ENCODE measurements at regions of chr3 and their contacts with region 1.

Region 1: GRCh38 chr3:121592856-121593702 is at the start of gene FBXO40:
- DNase-seq: no peak
- ATAC-seq: peak; percentile 80
- total RNA-seq, gene FBXO40: 182 TPM

Region 2: DNA sequence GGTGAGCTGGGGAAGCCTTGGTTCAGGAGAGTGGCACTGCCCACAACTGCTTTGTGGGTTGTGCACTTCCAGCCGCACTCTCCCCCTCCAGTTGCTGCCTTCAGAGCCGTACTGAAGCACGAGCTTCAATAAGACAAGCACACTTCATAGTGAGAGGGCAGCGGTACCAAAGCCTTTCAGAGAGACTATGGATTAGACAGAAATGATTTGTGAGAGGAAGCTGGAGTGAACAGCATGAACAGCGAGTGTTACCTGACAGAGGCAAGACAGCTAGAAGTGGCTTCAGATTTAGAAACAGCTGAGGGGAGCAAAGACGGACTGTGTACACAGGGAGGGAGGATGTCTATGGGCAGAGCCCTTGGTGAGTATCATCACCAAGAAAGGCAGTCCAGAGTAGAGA is 36.5 kb after region 1 on chr3:
- intact Hi-C with region 1: loop called (anchors 5 kb)
- DNase-seq: no peak
- ATAC-seq: peak; percentile 85

Region 3: DNA sequence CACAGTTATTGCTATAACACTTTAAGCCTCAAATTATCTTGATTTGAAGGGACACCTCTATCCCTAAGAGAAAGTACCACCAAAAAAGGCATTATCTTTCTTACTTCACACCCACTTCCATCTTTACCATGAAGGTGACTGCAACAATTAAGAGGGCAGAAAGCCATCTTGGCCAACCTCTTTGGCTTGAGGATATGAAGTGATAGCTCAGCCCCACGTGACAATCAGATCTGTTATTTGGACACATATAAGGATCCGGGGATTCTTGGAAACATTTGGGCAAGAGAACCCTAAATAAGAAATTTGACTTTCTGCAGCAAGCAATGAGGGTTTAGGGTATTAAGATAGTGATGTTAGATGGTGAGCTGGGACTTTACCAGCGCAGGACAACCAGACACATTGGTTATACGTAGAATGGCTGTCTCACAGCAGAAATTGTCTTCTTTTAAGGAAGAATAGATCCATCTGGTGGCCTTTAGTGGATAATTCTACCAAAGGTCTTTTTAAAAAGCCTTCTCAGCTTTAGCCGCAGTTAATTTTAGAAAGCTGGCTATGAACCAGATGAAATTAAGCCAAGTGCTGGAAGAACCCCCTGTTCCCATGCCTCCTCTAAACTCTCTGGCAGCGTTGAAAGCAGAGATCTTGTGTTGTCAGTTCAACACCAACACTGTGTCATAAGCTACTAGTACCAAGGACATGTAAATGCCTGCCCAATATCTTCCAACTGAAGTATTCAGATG is 55.3 kb after region 1 on chr3:
- intact Hi-C with region 1: loop called (anchors 2 kb)
- DNase-seq: no peak
- ATAC-seq: peak; percentile 98

Region 4: DNA sequence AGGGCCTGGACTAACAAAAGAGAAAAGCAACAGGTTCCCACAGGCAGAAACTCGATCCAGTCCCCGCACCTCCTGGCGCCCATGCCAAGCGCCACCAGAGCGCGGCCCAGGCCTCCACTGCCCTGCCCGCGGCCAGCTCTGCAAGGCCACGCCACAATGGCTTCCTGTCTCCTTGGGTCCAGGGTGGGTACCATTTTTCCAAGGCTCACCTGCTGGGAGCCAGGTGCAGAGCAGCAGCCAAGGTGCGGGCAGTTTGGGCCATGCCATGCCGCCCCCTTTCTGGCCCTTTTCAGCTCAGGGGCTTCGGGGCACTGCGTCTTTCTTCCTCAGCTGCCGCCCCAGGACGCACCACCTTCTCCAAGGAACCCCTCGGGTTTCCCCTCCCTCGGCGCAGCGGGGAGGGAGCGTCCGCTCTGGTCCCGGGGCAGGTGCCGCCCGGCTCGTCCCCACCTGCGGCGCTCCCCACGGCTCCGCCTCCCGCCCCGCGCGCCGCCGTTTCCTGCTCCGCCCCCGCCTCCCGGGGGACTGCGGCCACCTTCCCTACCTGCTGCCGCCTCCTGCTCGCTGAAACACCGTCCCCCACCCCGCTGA is 428.8 kb after region 1 on chr3 and contains the start of gene ILDR1:
- intact Hi-C with region 1: no loop called
- DNase-seq: no peak
- ATAC-seq: no peak
- total RNA-seq, gene ILDR1: 0.16 TPM